IMR-90 (cell line): ENCODE measurements at regions of chr2 and their contacts with region 1.

Region 1: GRCh38 chr2:46179037-46179652 is 118.1 kb upstream of the EPAS1 start:
- DNase-seq: peak; percentile 99
- ATAC-seq: peak; percentile 96
- H3K4me3 ChIP-seq: no peak overlapping the region
- H3K27ac ChIP-seq: peak overlapping the region; percentile 98
- H3K4me1 ChIP-seq: peaks cover 17% of the 10 kb centered on the region
- H3K27me3 ChIP-seq: no peaks in the 10 kb centered on the region
- CTCF ChIP-seq: no peak
- POLR2A ChIP-seq: peak; percentile 89
- RAD21 ChIP-seq: peak; percentile 38

Region 2: GRCh38 chr2:46010925-46011490 is 168.1 kb before region 1 on chr2:
- CTCF ChIA-PET with region 1: no interaction called
- POLR2A ChIA-PET with region 1: no interaction called
- dilution Hi-C with region 1: no loop called
- in situ Hi-C with region 1: no loop called
- intact Hi-C with region 1: loop called (anchors 1 kb)
- DNase-seq: peak; percentile 74
- ATAC-seq: peak; percentile 59
- H3K4me3 ChIP-seq: no peak overlapping the region
- H3K27ac ChIP-seq: peak overlapping the region; percentile 48; the same call in 1 of the 2 replicates
- H3K4me1 ChIP-seq: peaks cover 38% of the 10 kb centered on the region
- H3K27me3 ChIP-seq: no peaks in the 10 kb centered on the region
- CTCF ChIP-seq: peak; percentile 76
- POLR2A ChIP-seq: no peak
- RAD21 ChIP-seq: peak; percentile 70

Region 3: GRCh38 chr2:46073540-46074018 is 105.6 kb before region 1 on chr2:
- CTCF ChIA-PET with region 1: no interaction called
- POLR2A ChIA-PET with region 1: no interaction called
- dilution Hi-C with region 1: no loop called
- in situ Hi-C with region 1: no loop called
- intact Hi-C with region 1: loop called (anchors 2 kb)
- DNase-seq: peak; percentile 97
- ATAC-seq: peak; percentile 73
- H3K4me3 ChIP-seq: peak overlapping the region; percentile 33; the same call in 1 of the 2 replicates
- H3K27ac ChIP-seq: peak overlapping the region; percentile 86
- H3K4me1 ChIP-seq: peaks cover 29% of the 10 kb centered on the region
- H3K27me3 ChIP-seq: no peaks in the 10 kb centered on the region
- CTCF ChIP-seq: no peak
- POLR2A ChIP-seq: peak; percentile 68
- RAD21 ChIP-seq: peak; percentile 29

Region 4: DNA sequence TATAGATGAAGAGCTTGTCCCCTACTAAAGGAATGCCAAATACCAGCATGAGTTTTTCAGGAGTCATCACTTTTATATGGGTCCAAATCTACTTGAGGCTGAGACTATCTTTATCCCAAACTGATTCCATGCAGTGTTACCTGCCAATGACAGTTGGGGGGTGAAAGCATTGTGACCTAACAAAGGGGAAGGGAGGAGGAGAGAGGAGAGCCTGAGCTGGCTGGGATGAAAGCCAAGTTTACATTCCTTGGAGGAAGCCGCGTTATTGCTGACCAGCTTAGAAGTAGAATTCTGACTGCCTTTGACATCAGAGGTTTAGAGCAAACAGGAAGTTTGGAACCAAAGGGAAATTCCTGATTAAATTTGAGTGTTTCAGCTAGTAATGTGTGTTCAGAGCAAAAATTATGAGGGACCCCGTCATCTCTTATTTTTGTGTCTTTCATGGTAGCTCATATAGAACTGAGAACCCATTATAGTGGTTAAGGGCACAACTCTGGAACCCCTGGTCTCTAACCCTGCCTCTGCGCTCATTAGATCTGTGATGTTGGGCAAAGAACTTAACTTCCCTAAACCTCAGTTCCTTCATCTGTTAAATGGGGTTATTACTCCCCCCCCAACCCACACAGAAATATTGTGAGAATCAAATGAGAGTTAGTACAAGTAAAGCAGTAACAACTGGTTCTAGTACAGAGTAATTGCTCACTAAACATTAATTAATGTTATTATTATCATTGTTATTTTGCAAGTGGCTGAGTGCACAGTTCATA is 81.2 kb before region 1 on chr2:
- CTCF ChIA-PET with region 1: no interaction called
- POLR2A ChIA-PET with region 1: no interaction called
- dilution Hi-C with region 1: no loop called
- in situ Hi-C with region 1: no loop called
- intact Hi-C with region 1: loop called (anchors 5 kb)
- DNase-seq: peak; percentile 100
- ATAC-seq: peak; percentile 80
- H3K4me3 ChIP-seq: no peak overlapping the region
- H3K27ac ChIP-seq: peak overlapping the region; percentile 85; the same call in 1 of the 2 replicates
- H3K4me1 ChIP-seq: peaks cover 12% of the 10 kb centered on the region
- H3K27me3 ChIP-seq: no peaks in the 10 kb centered on the region
- CTCF ChIP-seq: no peak
- POLR2A ChIP-seq: no peak
- RAD21 ChIP-seq: peak; percentile 19

Region 5: GRCh38 chr2:46117379-46117778 is 61.8 kb before region 1 on chr2:
- CTCF ChIA-PET with region 1: no interaction called
- POLR2A ChIA-PET with region 1: no interaction called
- dilution Hi-C with region 1: no loop called
- in situ Hi-C with region 1: no loop called
- intact Hi-C with region 1: no loop called
- DNase-seq: peak; percentile 67
- ATAC-seq: no peak
- H3K4me3 ChIP-seq: no peak overlapping the region
- H3K27ac ChIP-seq: no peak overlapping the region
- H3K4me1 ChIP-seq: peaks cover 16% of the 10 kb centered on the region
- H3K27me3 ChIP-seq: no peaks in the 10 kb centered on the region
- CTCF ChIP-seq: no peak
- POLR2A ChIP-seq: no peak
- RAD21 ChIP-seq: no peak

Region 6: GRCh38 chr2:46216257-46216656 is 37.1 kb after region 1 on chr2:
- CTCF ChIA-PET with region 1: no interaction called
- POLR2A ChIA-PET with region 1: interaction called, 13 read pairs
- dilution Hi-C with region 1: no loop called
- in situ Hi-C with region 1: no loop called
- intact Hi-C with region 1: no loop called
- DNase-seq: peak; percentile 79
- ATAC-seq: peak; percentile 75
- H3K4me3 ChIP-seq: no peak overlapping the region
- H3K27ac ChIP-seq: no peak overlapping the region
- H3K4me1 ChIP-seq: peaks cover 6% of the 10 kb centered on the region
- H3K27me3 ChIP-seq: no peaks in the 10 kb centered on the region; the same call in 1 of the 2 replicates
- CTCF ChIP-seq: no peak
- POLR2A ChIP-seq: no peak
- RAD21 ChIP-seq: no peak